ENCODE measurements at regions of chr5 and their contacts with region 1.

Region 1: GRCh38 chr5:36739751-36740221 is 133.4 kb downstream of the SLC1A3 start:
- DNase-seq: peak; percentile 88
- H3K4me3 Mint-ChIP-seq: no peak overlapping the region
- H3K27ac Mint-ChIP-seq: no peak overlapping the region
- H3K4me1 Mint-ChIP-seq: peaks cover 9% of the 10 kb centered on the region
- H3K27me3 Mint-ChIP-seq: peaks cover 19% of the 10 kb centered on the region

Region 2: DNA sequence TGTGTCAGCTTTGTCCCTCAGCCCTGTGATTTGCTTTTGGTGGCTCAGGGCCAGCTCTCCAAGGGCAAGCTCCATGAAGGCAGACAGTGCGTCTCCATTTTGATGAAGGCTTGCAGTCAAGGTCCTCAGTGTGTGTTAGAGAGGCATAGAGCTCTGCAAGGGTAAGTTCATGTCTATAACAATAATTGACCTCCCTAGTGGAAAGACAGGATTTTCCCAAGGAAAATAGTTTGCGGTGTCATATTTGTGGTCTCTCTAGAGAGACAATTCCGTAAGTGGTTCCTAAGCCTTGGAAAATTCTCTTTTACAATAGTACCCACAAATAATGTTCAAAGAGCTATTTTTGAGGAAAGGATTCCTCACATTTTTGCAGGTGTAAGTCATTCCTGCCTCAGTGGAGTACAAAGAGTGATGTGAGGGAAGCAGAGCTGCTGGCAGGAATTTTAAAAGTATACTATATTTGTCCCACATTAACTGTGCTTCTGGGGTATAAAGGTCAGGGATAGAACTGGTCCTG is 93.2 kb before region 1 on chr5:
- CTCF ChIA-PET with region 1: no interaction called
- intact Hi-C with region 1: no loop called
- DNase-seq: no peak
- H3K4me3 Mint-ChIP-seq: no peak overlapping the region
- H3K27ac Mint-ChIP-seq: no peak overlapping the region
- H3K4me1 Mint-ChIP-seq: no peaks in the 10 kb centered on the region
- H3K27me3 Mint-ChIP-seq: peaks cover 15% of the 10 kb centered on the region

Region 3: GRCh38 chr5:36870399-36871040 is 130.7 kb after region 1 on chr5:
- CTCF ChIA-PET with region 1: interaction called, 30 read pairs
- intact Hi-C with region 1: loop called (anchors 1 kb)
- DNase-seq: no peak
- H3K4me3 Mint-ChIP-seq: no peak overlapping the region
- H3K27ac Mint-ChIP-seq: no peak overlapping the region
- H3K4me1 Mint-ChIP-seq: peaks cover 23% of the 10 kb centered on the region
- H3K27me3 Mint-ChIP-seq: no peaks in the 10 kb centered on the region

Region 4: GRCh38 chr5:36944607-36945225 is 204.9 kb after region 1 on chr5:
- CTCF ChIA-PET with region 1: no interaction called
- intact Hi-C with region 1: loop called (anchors 1 kb)
- DNase-seq: no peak
- H3K4me3 Mint-ChIP-seq: no peak overlapping the region
- H3K27ac Mint-ChIP-seq: no peak overlapping the region
- H3K4me1 Mint-ChIP-seq: peaks cover 49% of the 10 kb centered on the region
- H3K27me3 Mint-ChIP-seq: no peaks in the 10 kb centered on the region

Region 5: DNA sequence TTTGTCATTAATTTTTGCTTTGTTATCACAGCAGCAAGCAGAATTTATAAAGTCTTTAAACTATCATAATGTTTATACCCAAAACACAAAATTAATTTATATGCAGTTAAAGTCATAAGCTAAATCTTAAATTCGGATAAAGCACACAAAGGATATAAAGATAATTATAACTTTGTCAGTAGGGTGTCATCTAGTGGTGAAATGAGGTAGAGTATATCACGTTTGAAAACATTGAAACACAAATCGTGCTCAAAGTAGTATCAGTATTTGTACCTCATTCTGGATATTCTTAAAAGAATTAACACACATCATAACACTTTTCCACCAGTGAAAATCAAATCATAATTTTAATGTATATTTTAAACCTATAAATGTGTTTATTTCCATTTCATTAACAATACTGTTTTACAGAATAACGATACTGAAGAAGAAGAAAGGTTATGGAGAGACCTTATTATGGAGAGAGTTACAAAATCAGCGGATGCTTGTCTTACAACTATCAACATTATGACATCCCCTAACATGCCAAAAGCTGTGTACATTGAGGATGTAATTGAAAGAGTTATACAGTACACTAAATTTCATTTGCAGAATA is 266.3 kb after region 1 on chr5:
- CTCF ChIA-PET with region 1: interaction called, 11 read pairs
- intact Hi-C with region 1: loop called (anchors 1 kb)
- DNase-seq: no peak
- H3K4me3 Mint-ChIP-seq: no peak overlapping the region
- H3K27ac Mint-ChIP-seq: no peak overlapping the region
- H3K4me1 Mint-ChIP-seq: no peaks in the 10 kb centered on the region
- H3K27me3 Mint-ChIP-seq: no peaks in the 10 kb centered on the region

Region 6: GRCh38 chr5:38193015-38193581 is 1453.3 kb after region 1 on chr5:
- CTCF ChIA-PET with region 1: no interaction called
- intact Hi-C with region 1: loop called (anchors 10 kb)
- DNase-seq: peak; percentile 78
- H3K4me3 Mint-ChIP-seq: no peak overlapping the region
- H3K27ac Mint-ChIP-seq: no peak overlapping the region
- H3K4me1 Mint-ChIP-seq: peaks cover 4% of the 10 kb centered on the region
- H3K27me3 Mint-ChIP-seq: peaks cover 22% of the 10 kb centered on the region

Measured in activated naive CD4-positive, alpha-beta T cell treated with anti-CD3 and anti-CD28 coated beads for 36 hours (primary cell).